GM12878 (cell line): ENCODE measurements at regions of chr16 and their contacts with region 1.

Region 1: GRCh38 chr16:70523076-70523742 is at the start of gene COG4:
- DNase-seq: peak; percentile 58
- ATAC-seq: peak; percentile 67
- H3K4me3 ChIP-seq: peak within 1 kb of the TSS; percentile 86
- H3K27ac ChIP-seq: peak within 1 kb of the TSS; percentile 99
- H3K4me1 ChIP-seq: peaks cover 14% of the 10 kb centered on the region
- H3K27me3 ChIP-seq: no peaks in the 10 kb centered on the region
- CTCF ChIP-seq: no peak
- EP300 ChIP-seq: no peak
- POLR2A ChIP-seq: peak; percentile 93
- RAD21 ChIP-seq: no peak
- polyA plus RNA-seq, gene COG4: 7.0 to 8.9 TPM

Region 2: DNA sequence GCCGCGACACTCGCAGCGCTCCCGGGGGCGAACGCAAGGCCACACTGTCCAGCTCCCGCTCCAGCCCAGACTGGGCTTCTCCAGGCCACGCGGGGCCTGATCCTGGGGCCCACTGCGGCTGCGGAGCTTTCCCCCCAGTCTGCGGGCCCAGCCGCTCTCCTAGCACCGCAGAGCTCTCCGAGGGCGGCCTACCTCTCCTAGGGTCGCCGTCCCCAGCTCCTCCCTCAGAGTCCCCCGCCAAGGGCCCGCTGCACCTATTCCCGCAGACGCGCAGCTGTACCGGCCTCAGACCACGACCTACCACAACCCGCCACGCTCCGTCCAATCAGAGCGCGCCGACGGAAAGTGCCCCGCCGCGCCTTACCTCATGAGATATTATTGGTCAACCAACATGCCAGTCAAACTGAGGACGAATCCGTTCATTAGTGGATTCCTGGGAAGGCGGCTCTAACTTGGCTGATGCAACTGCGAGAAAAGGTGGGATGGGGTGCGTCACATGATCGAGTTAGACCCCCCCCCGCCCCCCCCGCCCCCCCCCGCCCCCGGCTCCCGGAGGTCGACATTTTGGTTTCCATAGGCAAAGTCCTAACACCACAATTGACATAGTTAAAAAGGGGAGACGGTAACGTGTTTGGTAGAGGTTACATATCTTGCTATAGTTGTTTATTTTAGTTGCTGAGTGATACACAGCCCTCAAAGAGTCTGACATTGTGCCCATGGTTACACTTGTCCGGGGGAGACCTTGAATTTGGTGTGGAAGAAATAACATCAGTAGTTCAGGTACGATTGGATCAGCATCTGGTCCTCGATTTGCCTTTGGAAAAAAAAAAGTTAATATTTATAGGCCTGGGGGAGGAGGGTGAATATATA is 233.7 kb before region 1 on chr16 and contains the start of gene AARS1:
- CTCF ChIA-PET with region 1: no interaction called
- POLR2A ChIA-PET with region 1: no interaction called
- RAD21 ChIA-PET with region 1: no interaction called
- SMC1A ChIA-PET with region 1: no interaction called
- in situ Hi-C with region 1: no loop called
- intact Hi-C with region 1: loop called (anchors 5 kb)
- DNase-seq: peak; percentile 98
- ATAC-seq: peak; percentile 99
- H3K4me3 ChIP-seq: peak within 1 kb of the TSS; percentile 100
- H3K27ac ChIP-seq: peak within 1 kb of the TSS; percentile 89
- H3K4me1 ChIP-seq: peaks cover 7% of the 10 kb centered on the region
- H3K27me3 ChIP-seq: no peaks in the 10 kb centered on the region
- CTCF ChIP-seq: no peak
- EP300 ChIP-seq: no peak
- POLR2A ChIP-seq: peak; percentile 97
- RAD21 ChIP-seq: no peak
- polyA plus RNA-seq, gene AARS1: 21.5 to 47.7 TPM

Region 3: DNA sequence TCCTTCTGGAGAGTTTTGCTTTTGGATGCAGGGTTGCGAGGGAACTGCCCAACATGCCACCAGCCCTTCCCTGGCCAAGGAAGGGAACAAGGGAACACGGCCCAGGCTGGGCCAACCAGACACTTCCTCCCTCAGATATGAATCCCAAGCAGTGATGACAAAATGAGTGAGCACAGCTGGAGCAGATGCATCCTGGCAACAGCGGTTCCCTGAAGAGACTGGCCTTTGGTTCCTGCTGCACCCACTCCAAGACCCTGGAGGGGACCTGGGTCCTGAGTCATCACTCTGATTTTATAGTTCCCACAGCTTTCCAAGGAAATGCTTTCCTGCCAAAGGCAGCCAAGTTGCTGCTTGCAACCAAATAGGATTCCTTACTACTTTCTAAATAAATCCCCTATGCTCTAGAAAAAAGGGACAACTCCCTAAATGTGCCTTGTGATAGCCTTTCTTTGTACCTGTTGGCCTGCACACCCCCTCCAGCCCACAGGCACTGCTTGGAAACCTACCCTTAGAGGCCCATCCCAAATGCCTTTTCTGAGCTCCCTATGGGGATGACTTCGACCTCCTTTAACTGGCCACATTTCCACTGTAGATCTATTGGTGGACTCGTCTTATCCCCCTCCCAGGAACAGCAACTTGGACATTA is 89.6 kb before region 1 on chr16:
- CTCF ChIA-PET with region 1: interaction called, 5 read pairs
- POLR2A ChIA-PET with region 1: interaction called, 15 read pairs
- RAD21 ChIA-PET with region 1: interaction called, 11 read pairs
- SMC1A ChIA-PET with region 1: interaction called, 22 read pairs
- in situ Hi-C with region 1: no loop called
- intact Hi-C with region 1: loop called (anchors 1 kb)
- DNase-seq: no peak
- ATAC-seq: no peak
- H3K4me3 ChIP-seq: peak overlapping the region; percentile 70
- H3K27ac ChIP-seq: peak overlapping the region; percentile 88
- H3K4me1 ChIP-seq: peaks cover 57% of the 10 kb centered on the region
- H3K27me3 ChIP-seq: no peaks in the 10 kb centered on the region
- CTCF ChIP-seq: no peak
- EP300 ChIP-seq: no peak
- POLR2A ChIP-seq: no peak
- RAD21 ChIP-seq: no peak

Region 4: GRCh38 chr16:70438969-70439862 is 84.0 kb before region 1 on chr16 and contains the start of gene ST3GAL2:
- CTCF ChIA-PET with region 1: no interaction called
- POLR2A ChIA-PET with region 1: interaction called, 15 read pairs
- RAD21 ChIA-PET with region 1: interaction called, 5 read pairs
- SMC1A ChIA-PET with region 1: interaction called, 22 read pairs
- in situ Hi-C with region 1: no loop called
- intact Hi-C with region 1: loop called (anchors 2 kb)
- DNase-seq: peak; percentile 74
- ATAC-seq: peak; percentile 91
- H3K4me3 ChIP-seq: peak within 1 kb of the TSS; percentile 88
- H3K27ac ChIP-seq: peak within 1 kb of the TSS; percentile 71
- H3K4me1 ChIP-seq: peaks cover 20% of the 10 kb centered on the region
- H3K27me3 ChIP-seq: no peaks in the 10 kb centered on the region
- CTCF ChIP-seq: 0 out of 6 replicates have a peak, but pooled peaks of 1 of the 3 experiments have one; percentile 2
- EP300 ChIP-seq: no peak
- POLR2A ChIP-seq: peak; percentile 67
- RAD21 ChIP-seq: no peak
- polyA plus RNA-seq, gene ST3GAL2: 0.95 to 1.4 TPM

Region 5: GRCh38 chr16:70478912-70479341 is 44.3 kb before region 1 on chr16:
- CTCF ChIA-PET with region 1: interaction called, 5 read pairs
- POLR2A ChIA-PET with region 1: interaction called, 10 read pairs
- RAD21 ChIA-PET with region 1: interaction called, 6 read pairs
- SMC1A ChIA-PET with region 1: interaction called, 6 read pairs
- in situ Hi-C with region 1: no loop called
- intact Hi-C with region 1: loop called (anchors 2 kb)
- DNase-seq: no peak
- ATAC-seq: no peak
- H3K4me3 ChIP-seq: no peak overlapping the region
- H3K27ac ChIP-seq: no peak overlapping the region
- H3K4me1 ChIP-seq: peaks cover 35% of the 10 kb centered on the region
- H3K27me3 ChIP-seq: no peaks in the 10 kb centered on the region
- CTCF ChIP-seq: no peak
- EP300 ChIP-seq: no peak
- POLR2A ChIP-seq: 0 out of 2 replicates have a peak, but pooled peaks have one; percentile 4
- RAD21 ChIP-seq: no peak

Region 6: GRCh38 chr16:70508752-70509151 is 14.5 kb before region 1 on chr16:
- CTCF ChIA-PET with region 1: interaction called, 8 read pairs
- POLR2A ChIA-PET with region 1: no interaction called
- RAD21 ChIA-PET with region 1: interaction called, 9 read pairs
- SMC1A ChIA-PET with region 1: interaction called, 11 read pairs
- in situ Hi-C with region 1: no loop called
- intact Hi-C with region 1: no loop called
- DNase-seq: no peak
- ATAC-seq: peak; percentile 94
- H3K4me3 ChIP-seq: no peak overlapping the region
- H3K27ac ChIP-seq: no peak overlapping the region
- H3K4me1 ChIP-seq: no peaks in the 10 kb centered on the region
- H3K27me3 ChIP-seq: no peaks in the 10 kb centered on the region
- CTCF ChIP-seq: peak in 2 of 3 experiments; percentile 28 to 55; a peak in 3 of 6 replicates
- EP300 ChIP-seq: no peak
- POLR2A ChIP-seq: no peak
- RAD21 ChIP-seq: peak; percentile 34; the same call in 1 of the 2 replicates